ENCODE measurements at regions of chr13 and their contacts with region 1.

Region 1: DNA sequence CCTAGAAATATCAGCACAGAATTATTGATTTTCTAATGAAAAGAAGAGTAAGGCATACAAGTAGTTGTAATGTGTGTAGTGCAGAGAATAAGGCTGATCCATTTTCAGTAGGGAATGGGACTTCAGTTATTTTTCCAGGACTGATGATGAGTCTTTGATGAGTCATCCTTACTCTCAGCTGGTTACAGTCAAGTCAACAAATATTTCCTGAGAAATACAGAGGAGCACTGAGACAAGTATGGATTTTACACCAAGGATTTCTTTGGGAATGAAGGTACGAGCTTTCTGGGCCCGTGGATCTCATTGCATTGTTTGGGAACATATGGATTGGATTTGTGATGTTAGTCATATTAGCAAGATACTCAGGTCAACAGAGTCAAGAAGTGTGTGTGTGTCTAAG is 502.7 kb downstream of the FGF9 start:
- DNase-seq: peak; percentile 16
- ATAC-seq: peak; percentile 73
- H3K4me3 ChIP-seq: no peak overlapping the region
- H3K27ac ChIP-seq: no peak overlapping the region
- H3K4me1 ChIP-seq: peaks cover 4 to 18% of the 10 kb centered on the region in 2 experiments; a peak in 3 of 4 replicates
- H3K27me3 ChIP-seq: no peaks in the 10 kb centered on the region
- CTCF ChIP-seq: no peak
- POLR2A ChIP-seq: no peak
- RAD21 ChIP-seq: no peak

Region 2: GRCh38 chr13:21938168-21938567 is 235.4 kb before region 1 on chr13:
- CTCF ChIA-PET with region 1: no interaction called
- POLR2A ChIA-PET with region 1: no interaction called
- RAD21 ChIA-PET with region 1: no interaction called
- intact Hi-C with region 1: no loop called
- DNase-seq: no peak
- ATAC-seq: no peak
- H3K4me3 ChIP-seq: no peak overlapping the region
- H3K27ac ChIP-seq: no peak overlapping the region
- H3K4me1 ChIP-seq: no peaks in the 10 kb centered on the region
- H3K27me3 ChIP-seq: peaks cover 5% of the 10 kb centered on the region; the same call in 1 of the 2 replicates
- CTCF ChIP-seq: no peak
- POLR2A ChIP-seq: no peak
- RAD21 ChIP-seq: no peak

Region 3: DNA sequence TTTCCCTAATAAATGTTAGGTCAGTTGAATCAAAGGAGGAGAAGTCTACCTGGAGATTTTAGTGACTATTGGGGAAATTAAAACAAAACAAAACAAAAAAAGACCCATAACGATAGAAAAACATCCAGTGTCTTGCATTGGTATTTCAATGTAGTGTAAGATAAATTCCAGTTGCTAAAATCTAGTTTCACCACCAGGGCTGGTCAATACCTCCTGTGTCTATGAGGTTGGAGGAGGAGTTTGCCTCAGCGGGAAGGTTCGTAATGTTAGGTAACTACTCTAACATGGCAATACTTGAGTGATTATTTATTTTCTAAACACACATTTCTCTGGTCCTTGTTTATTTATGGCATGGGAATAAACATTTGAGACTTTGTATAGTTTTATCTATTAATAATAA is 19.6 kb before region 1 on chr13:
- CTCF ChIA-PET with region 1: no interaction called
- POLR2A ChIA-PET with region 1: no interaction called
- RAD21 ChIA-PET with region 1: no interaction called
- intact Hi-C with region 1: no loop called
- DNase-seq: no peak
- ATAC-seq: no peak
- H3K4me3 ChIP-seq: no peak overlapping the region
- H3K27ac ChIP-seq: no peak overlapping the region
- H3K4me1 ChIP-seq: no peaks in the 10 kb centered on the region
- H3K27me3 ChIP-seq: no peaks in the 10 kb centered on the region
- CTCF ChIP-seq: no peak
- POLR2A ChIP-seq: no peak
- RAD21 ChIP-seq: no peak

Region 4: DNA sequence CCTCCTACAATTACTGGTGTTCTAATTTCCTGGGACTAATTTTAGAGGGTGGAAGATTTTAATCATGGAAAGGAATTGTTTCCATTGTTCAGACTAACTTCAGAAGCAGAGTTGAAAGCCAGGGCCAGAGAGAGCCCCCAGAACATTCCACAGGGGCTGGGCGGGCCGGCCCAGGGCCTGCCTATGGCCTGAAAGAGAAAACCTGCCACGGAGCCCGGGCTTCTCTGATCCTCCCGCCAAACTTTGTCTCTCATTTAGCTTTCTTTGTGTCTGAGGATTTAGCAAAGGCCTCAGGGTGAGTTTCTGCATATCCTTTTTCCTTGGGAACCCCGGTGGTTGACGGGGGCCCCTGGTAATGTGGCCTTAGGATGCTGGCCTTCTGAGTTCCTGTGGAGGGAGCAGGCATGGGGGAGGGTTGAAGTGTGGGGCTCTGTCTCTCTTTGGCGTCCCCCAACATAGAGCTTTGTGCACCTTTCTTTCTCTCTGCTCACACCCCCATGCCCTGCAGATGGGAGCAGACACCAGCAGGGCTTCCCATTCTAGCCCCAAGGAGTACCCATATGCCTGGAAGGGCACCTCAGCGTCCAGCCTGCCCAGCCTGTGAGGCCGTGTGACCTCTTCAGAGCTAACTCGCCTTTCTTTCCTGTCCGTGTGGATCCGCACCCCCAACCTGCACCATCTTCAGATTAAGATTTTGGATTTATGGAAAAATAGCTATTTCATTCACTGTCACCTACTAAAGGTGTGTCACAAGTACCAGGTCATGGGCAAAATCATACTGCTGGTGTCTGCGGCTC is 36.7 kb after region 1 on chr13:
- CTCF ChIA-PET with region 1: no interaction called
- POLR2A ChIA-PET with region 1: no interaction called
- RAD21 ChIA-PET with region 1: no interaction called
- intact Hi-C with region 1: loop called (anchors 2 kb)
- DNase-seq: no peak
- ATAC-seq: no peak
- H3K4me3 ChIP-seq: no peak overlapping the region
- H3K27ac ChIP-seq: no peak overlapping the region
- H3K4me1 ChIP-seq: no peaks in the 10 kb centered on the region
- H3K27me3 ChIP-seq: no peaks in the 10 kb centered on the region
- CTCF ChIP-seq: no peak
- POLR2A ChIP-seq: no peak
- RAD21 ChIP-seq: no peak